ENCODE measurements at regions of chr1 and their contacts with region 1.

Region 1: DNA sequence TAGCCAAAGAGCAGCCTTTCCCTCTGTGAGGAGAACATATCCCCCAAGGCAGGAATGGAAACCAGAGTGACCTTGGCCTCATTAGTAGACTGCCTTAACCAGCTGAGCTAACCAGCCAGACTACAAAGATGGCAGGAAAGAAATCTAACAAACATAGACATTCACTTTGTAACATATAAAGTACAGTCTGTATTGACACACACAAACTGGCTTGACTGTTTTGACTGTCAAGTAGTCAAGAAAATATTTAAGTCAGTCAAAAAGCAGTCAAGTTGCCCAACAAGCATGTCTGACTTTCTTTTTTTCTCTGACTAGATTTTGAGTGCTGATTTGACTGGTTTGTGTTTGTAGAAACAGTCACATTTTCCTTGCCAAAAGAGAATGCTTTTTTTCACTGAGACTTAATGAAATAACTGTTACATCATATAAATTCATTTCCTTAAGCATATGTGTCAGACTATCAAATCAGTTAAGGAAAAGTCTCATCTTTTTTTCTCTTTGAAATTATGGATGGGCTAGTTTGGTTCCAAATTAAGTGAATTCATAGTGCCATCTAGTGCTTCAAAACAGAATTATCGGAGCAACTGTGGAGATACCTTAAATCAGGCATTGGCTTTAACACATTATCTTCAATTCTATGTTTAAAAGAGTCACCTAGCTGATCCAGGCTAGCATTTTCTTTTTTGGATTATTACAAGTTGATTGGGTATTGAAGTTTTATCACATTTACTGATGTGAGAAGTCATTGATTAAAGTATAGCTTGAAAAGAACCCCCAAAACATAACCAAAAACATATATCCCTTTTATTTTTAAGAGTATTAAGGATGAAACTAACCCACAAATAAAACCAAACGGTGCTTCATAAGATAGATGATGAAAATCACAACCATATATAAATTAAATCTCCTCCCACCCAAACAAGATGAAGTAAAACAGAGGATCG is 75.0 kb downstream of the ATP6V1G3 start:
- DNase-seq: peak; percentile 28
- ATAC-seq: peak; percentile 64; the same call in 2 of the 3 replicates
- H3K4me3 ChIP-seq: no peak overlapping the region
- H3K27ac ChIP-seq: no peak overlapping the region
- H3K4me1 ChIP-seq: no peaks in the 10 kb centered on the region
- H3K27me3 ChIP-seq: no peaks in the 10 kb centered on the region; a peak in 1 of 5 replicates
- CTCF ChIP-seq: peak; percentile 64
- EP300 ChIP-seq: no peak
- POLR2A ChIP-seq: no peak
- RAD21 ChIP-seq: no peak

Region 2: DNA sequence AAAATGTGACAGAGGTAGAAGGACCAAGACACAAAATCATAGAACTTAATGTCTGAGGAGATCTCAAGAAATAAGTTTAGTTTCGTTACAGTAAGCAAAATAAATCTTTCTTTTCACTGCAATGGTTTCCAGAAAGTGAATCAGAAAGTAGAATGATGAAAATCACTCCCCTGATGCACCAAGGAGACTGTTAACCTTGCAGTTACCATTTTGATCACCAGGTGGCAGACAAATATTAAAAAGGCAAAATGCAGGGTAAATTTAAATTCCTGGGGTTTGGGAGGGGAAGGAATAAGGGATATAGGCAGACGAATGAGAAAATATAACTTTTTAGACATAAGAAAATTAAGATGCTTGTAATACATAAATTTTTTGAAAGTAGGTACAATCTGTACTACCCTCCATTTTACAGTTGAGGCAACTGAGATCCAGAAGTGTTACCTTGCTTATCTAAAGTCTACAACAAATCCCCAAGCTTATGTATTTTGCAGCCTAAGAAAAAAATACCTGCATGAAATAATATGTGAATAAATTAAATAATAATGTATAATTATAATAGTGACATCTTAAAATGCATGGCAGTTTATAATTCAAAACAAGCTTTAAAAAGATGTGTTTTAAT is 944.2 kb before region 1 on chr1:
- CTCF ChIA-PET with region 1: no interaction called
- POLR2A ChIA-PET with region 1: no interaction called
- in situ Hi-C with region 1: loop called (anchors 25 kb)
- intact Hi-C with region 1: loop called (anchors 10 kb)
- DNase-seq: peak; percentile 23
- ATAC-seq: 0 out of 3 replicates have a peak, but pooled peaks have one; percentile 28
- H3K4me3 ChIP-seq: no peak overlapping the region
- H3K27ac ChIP-seq: no peak overlapping the region
- H3K4me1 ChIP-seq: no peaks in the 10 kb centered on the region
- H3K27me3 ChIP-seq: no peaks in the 10 kb centered on the region
- CTCF ChIP-seq: peak; percentile 59
- EP300 ChIP-seq: no peak
- POLR2A ChIP-seq: no peak
- RAD21 ChIP-seq: peak; percentile 39; the same call in 1 of the 2 replicates

Region 3: DNA sequence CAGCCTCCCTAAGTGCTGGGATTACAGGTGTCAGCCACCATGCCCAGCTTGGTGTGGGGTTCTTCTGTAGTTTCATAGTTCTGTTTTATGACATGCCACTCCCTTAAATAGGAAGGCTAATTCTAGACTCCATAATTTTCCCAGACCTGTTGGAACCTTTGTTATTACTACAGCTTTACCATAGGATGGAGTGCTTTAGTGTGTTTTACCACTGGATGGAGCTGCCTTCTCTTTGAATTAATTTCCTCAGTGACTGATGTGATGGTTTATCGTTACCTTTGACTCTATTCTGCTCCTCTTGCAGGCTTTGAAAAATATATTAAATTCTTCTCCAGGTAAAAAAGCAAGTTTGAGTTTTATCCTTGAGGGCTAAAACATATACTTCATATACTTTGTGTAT is 393.3 kb before region 1 on chr1:
- CTCF ChIA-PET with region 1: no interaction called
- POLR2A ChIA-PET with region 1: no interaction called
- in situ Hi-C with region 1: loop called (anchors 25 kb)
- intact Hi-C with region 1: loop called (anchors 5 kb)
- DNase-seq: no peak
- ATAC-seq: peak; percentile 34; the same call in 1 of the 3 replicates
- H3K4me3 ChIP-seq: no peak overlapping the region
- H3K27ac ChIP-seq: no peak overlapping the region
- H3K4me1 ChIP-seq: no peaks in the 10 kb centered on the region
- H3K27me3 ChIP-seq: no peaks in the 10 kb centered on the region
- CTCF ChIP-seq: peak; percentile 38
- EP300 ChIP-seq: no peak
- POLR2A ChIP-seq: no peak
- RAD21 ChIP-seq: no peak

Region 4: DNA sequence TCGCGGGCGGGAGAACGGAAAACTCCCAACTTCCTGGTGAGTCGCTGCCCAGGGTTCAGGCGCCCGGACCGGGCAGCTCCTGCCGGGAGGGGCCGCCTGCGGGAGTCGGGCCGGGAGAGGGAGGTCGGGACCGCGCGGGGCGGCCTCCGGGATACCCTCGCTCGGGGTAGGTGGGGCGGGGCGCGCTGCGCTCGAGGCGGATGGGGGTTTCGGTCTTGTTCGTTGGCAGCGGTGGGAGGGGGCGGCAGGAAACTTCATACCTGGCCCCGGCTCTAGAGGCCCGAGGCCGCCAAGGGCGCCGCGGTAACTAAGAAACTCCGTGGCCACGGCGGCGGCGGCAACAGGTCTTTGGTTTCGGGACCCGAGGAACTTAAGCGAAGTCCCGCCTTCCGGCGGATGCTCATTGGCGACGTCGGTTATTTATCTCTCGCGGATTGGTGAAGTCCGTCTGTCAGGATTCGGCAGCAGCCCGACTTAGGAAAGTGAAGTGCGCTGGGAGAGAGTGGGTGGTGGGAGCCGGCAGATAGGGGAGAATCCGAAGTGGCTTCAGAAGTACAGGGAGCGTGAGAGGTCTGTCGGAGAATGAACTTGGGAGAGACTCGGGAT is 308.1 kb before region 1 on chr1:
- CTCF ChIA-PET with region 1: no interaction called
- POLR2A ChIA-PET with region 1: no interaction called
- in situ Hi-C with region 1: no loop called
- intact Hi-C with region 1: loop called (anchors 10 kb)
- DNase-seq: peak; percentile 88
- ATAC-seq: peak; percentile 73
- H3K4me3 ChIP-seq: peak overlapping the region; percentile 51 to 90 (median 85)
- H3K27ac ChIP-seq: peak overlapping the region; percentile 82
- H3K4me1 ChIP-seq: peaks cover 38% of the 10 kb centered on the region
- H3K27me3 ChIP-seq: no peaks in the 10 kb centered on the region; a peak in 1 of 5 replicates
- CTCF ChIP-seq: no peak
- EP300 ChIP-seq: no peak
- POLR2A ChIP-seq: peak in 1 of 2 experiments; percentile 33; a peak in 1 of 4 replicates
- RAD21 ChIP-seq: no peak; the same call in 1 of the 2 replicates

Measured in HepG2 (cell line).